Activated naive CD4-positive, alpha-beta T cell treated with anti-CD3 and anti-CD28 coated beads for 36 hours (primary cell): ENCODE measurements at regions of chr4 and their contacts with region 1.

Region 1: GRCh38 chr4:25159884-25160713 is at the start of gene SEPSECS:
- DNase-seq: peak; percentile 97
- H3K4me3 Mint-ChIP-seq: peak within 1 kb of the TSS; percentile 93
- H3K27ac Mint-ChIP-seq: peak within 1 kb of the TSS; percentile 99
- H3K4me1 Mint-ChIP-seq: peaks cover 34% of the 10 kb centered on the region
- H3K27me3 Mint-ChIP-seq: no peaks in the 10 kb centered on the region
- total RNA-seq, gene SEPSECS: 14.7 to 17.9 TPM

Region 2: DNA sequence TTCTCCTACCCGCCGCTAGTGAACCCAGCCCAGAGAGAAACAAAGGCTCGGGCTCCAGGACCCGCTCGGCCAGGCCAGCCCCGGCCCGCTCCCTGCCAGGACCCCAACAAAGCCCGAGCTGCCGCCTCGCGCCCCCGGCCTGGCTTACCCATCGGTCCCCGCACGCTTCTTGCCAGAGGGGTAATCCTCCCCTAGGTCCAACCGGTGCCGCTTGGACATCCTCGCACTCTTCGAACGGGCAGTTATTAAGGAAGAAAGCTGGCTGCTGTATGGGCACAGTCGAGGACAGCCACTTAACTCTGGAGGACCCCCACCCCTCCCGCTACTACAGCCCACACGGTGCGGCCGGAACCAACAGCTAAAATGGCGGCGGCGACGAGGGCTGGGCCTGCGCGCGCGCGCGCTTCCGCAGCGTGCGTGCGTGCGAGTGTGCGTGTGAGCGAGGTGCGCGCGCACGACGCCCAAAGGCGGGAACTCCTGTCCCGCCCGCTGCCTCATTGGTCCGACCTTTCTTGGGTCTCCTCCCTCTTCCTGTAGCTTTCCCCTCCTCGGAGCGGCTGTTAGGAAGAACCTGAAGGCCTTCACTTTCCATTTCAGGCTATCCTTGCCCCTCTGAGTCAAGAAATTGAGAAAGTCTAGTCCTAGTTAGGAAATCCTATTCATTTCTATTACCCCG is 575.8 kb before region 1 on chr4 and contains the start of gene DHX15:
- CTCF ChIA-PET with region 1: no interaction called
- intact Hi-C with region 1: loop called (anchors 1 kb)
- DNase-seq: peak; percentile 94
- H3K4me3 Mint-ChIP-seq: peak within 1 kb of the TSS; percentile 95
- H3K27ac Mint-ChIP-seq: peak within 1 kb of the TSS; percentile 96
- H3K4me1 Mint-ChIP-seq: peaks cover 37% of the 10 kb centered on the region
- H3K27me3 Mint-ChIP-seq: no peaks in the 10 kb centered on the region
- total RNA-seq, gene DHX15: 197 to 199 TPM

Region 3: DNA sequence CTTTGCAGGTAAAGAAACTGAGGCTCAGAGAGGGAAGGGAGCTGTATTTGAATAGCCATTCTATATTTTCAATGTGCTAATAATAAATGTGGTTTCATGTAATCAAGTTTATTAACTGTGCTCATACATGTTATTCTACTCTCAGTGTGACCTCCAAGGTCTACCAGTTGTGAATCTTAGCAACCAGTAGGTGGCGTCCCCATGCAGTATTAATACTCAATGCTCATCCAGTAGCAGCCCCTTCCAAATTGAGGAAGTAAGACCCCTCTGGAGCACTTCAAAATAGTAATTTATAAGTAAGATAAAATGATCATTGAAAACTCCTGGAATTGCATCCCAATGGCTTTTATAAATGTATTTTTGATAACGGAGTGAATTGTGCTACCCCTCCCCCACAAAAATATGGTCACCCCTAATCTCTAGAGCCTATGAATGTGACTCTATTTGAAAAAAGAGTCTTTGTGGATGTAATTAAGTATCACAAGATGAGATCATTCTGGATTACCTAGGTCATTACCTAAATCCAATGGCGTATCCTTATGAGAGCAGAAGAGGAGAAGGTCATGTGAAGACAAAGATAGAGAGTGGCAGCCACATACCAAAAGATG is 20.5 kb after region 1 on chr4:
- CTCF ChIA-PET with region 1: interaction called, 8 read pairs
- intact Hi-C with region 1: loop called (anchors 1 kb)
- DNase-seq: peak; percentile 50
- H3K4me3 Mint-ChIP-seq: no peak overlapping the region
- H3K27ac Mint-ChIP-seq: no peak overlapping the region
- H3K4me1 Mint-ChIP-seq: peaks cover 32% of the 10 kb centered on the region
- H3K27me3 Mint-ChIP-seq: no peaks in the 10 kb centered on the region

Region 4: GRCh38 chr4:25320773-25321172 is 160.7 kb after region 1 on chr4:
- CTCF ChIA-PET with region 1: no interaction called
- intact Hi-C with region 1: loop called (anchors 1 kb)
- DNase-seq: peak; percentile 18
- H3K4me3 Mint-ChIP-seq: peak overlapping the region; percentile 42
- H3K27ac Mint-ChIP-seq: peak overlapping the region; percentile 76
- H3K4me1 Mint-ChIP-seq: peaks cover 35% of the 10 kb centered on the region
- H3K27me3 Mint-ChIP-seq: no peaks in the 10 kb centered on the region

Region 5: DNA sequence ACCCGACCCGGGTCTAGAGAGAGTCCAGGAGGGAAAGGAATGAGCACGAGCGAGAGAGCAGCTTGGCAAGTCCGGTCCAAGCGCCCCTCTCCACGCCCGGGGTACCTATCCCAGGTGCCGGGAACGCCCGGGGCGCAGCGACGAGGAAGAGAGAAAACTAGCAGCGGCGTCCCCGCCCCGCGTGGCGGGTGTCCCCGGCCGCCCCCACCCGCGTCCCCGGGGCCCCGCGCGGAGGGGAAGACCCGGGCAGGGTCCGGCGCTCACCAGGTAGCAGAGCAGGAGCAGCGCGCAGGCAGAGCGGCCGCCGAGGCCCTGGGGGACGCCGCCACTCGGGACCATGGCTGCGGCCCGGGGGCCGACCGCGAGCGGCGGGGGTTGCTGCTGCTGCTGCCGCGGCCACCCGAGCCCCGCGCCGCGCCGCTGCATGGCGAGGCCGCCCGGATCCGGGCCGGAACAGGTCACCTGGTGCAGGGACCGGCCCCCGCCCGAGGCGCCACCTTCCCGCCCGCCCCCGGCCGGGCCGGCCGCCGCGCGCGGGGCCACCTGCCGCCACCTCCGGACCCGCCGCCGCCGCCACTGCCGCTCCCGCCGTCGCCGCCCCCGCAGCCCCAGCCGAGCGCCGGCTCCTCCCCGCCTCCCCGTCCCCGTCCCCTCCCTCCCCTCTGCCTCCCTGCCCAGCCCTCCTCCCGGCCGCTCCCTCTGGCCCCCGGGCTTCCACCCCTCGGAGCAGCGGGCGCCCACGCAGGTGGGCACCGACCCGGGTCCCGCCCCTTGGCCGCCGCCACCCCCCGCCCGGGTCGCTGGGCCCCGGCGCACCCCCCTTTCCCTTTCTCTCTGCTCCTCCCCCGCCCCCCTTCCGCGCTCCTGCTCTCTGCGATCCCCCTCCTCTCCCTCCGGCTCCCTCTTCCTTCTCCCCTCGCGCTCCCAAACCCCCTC is 702.6 kb after region 1 on chr4 and contains the start of gene SEL1L3:
- CTCF ChIA-PET with region 1: no interaction called
- intact Hi-C with region 1: loop called (anchors 2 kb)
- DNase-seq: peak; percentile 53
- H3K4me3 Mint-ChIP-seq: peak within 1 kb of the TSS; percentile 93
- H3K27ac Mint-ChIP-seq: peak within 1 kb of the TSS; percentile 92
- H3K4me1 Mint-ChIP-seq: peaks cover 33% of the 10 kb centered on the region
- H3K27me3 Mint-ChIP-seq: no peaks in the 10 kb centered on the region
- total RNA-seq, gene SEL1L3: 32.3 to 38.2 TPM